Tibial artery (tissue), 4 donors: ENCODE measurements at regions of chr7 and their contacts with region 1.

Region 1: GRCh38 chr7:1086588-1087464 is 1.1 kb upstream of the GPER1 start:
- DNase-seq: peak; percentile 74 to 83
- H3K4me3 ChIP-seq: peak overlapping the region; percentile 46 to 53
- H3K27ac ChIP-seq: peak overlapping the region; percentile 78 to 81
- H3K4me1 ChIP-seq: peaks cover 0 to 38% (median 32%) of the 10 kb centered on the region in 4 donors
- H3K27me3 ChIP-seq: no peaks in the 10 kb centered on the region
- CTCF ChIP-seq: peak; percentile 86 to 90

Region 2: DNA sequence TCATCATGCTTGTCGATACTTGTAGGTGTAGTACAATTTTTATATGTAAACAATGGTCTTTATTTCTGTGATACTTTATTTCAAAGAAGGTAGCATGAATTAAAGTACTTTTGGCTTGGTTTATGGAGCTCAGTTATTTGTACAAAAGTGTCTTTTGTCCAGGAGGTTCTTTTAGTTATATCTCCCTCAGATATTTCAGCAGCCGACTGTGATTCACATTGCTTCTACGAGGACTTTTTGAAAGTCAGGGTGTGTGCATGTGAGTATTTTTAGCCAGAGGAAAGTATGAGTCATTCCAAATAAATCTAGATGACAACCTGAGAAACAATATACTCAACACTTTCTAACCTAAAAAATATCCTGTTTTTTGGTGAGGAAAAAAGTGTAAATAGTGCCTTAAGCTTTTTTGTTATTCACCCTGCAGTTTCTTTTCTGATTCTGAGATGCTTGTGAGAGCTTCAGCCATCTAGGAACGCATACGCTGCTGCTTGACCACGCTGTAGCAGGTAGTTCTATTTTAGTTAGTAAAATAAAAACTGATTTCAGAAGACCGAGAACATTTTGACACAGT is 255.1 kb before region 1 on chr7:
- intact Hi-C with region 1: no loop called
- DNase-seq: no peak
- H3K4me3 ChIP-seq: peak overlapping the region; percentile 23 to 34
- H3K27ac ChIP-seq: peak overlapping the region; percentile 87 to 91
- H3K4me1 ChIP-seq: peaks cover 19 to 95% (median 63%) of the 10 kb centered on the region in 4 donors
- H3K27me3 ChIP-seq: no peaks in the 10 kb centered on the region
- CTCF ChIP-seq: no peak

Region 3: DNA sequence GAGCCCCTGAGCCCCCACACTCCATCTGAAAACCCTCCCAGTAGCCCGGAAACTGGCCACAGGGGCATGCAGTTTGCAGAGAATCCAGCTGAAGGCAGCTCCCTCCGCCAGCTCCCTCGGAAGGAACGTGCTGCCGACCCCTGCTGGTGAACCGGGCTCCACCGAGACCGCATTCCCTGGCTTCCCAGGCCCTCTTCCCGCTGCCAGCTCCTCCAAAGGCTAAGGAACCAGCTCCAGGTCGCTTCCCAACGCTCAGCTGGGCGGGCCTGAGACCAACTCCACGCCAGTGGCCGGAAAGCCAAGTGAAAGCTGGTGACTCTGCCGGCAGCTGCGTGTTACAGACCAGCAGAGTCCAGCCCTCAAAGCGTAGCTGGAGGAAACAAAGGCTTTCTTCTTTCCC is 36.9 kb after region 1 on chr7:
- intact Hi-C with region 1: loop called (anchors 5 kb)
- DNase-seq: peak; percentile 89 to 97
- H3K4me3 ChIP-seq: peak overlapping the region; percentile 38 to 45
- H3K27ac ChIP-seq: peak overlapping the region; percentile 90 to 94
- H3K4me1 ChIP-seq: peaks cover 0 to 30% (median 22%) of the 10 kb centered on the region in 4 donors
- H3K27me3 ChIP-seq: no peaks in the 10 kb centered on the region
- CTCF ChIP-seq: peak; percentile 69 to 83

Region 4: GRCh38 chr7:1137510-1138167 is 50.8 kb after region 1 on chr7:
- intact Hi-C with region 1: loop called (anchors 5 kb)
- DNase-seq: no peak
- H3K4me3 ChIP-seq: peak overlapping the region; percentile 62 to 69
- H3K27ac ChIP-seq: peak overlapping the region; percentile 66 to 84
- H3K4me1 ChIP-seq: peaks cover 0 to 15% (median 14%) of the 10 kb centered on the region in 4 donors
- H3K27me3 ChIP-seq: no peaks in the 10 kb centered on the region
- CTCF ChIP-seq: no peak

Region 5: GRCh38 chr7:1418505-1419309 is 331.9 kb after region 1 on chr7:
- intact Hi-C with region 1: loop called (anchors 5 kb)
- DNase-seq: no peak
- H3K4me3 ChIP-seq: no peak overlapping the region
- H3K27ac ChIP-seq: no peak overlapping the region
- H3K4me1 ChIP-seq: no peaks in the 10 kb centered on the region
- H3K27me3 ChIP-seq: peaks cover 0 to 70% of the 10 kb centered on the region in 2 donors
- CTCF ChIP-seq: no peak